CD4-positive, alpha-beta T cell (primary cell): ENCODE measurements at regions of chr1 and their contacts with region 1.

Region 1: GRCh38 chr1:101309334-101310311 is 72.8 kb downstream of the S1PR1 start:
- DNase-seq: peak; percentile 53 to 94 (median 74)
- ATAC-seq: peak; percentile 76
- H3K4me3 ChIP-seq: peak overlapping the region; percentile 52
- H3K4me3 Mint-ChIP-seq: peak overlapping the region; percentile 76
- H3K27ac ChIP-seq: peak overlapping the region; percentile 82 to 88
- H3K27ac Mint-ChIP-seq: peak overlapping the region; percentile 96
- H3K4me1 ChIP-seq: peaks cover 56% of the 10 kb centered on the region
- H3K4me1 Mint-ChIP-seq: peaks cover 66% of the 10 kb centered on the region
- H3K27me3 ChIP-seq: no peaks in the 10 kb centered on the region
- H3K27me3 Mint-ChIP-seq: no peaks in the 10 kb centered on the region
- CTCF ChIP-seq: peak; percentile 89

Region 2: GRCh38 chr1:100928128-100928527 is 381.5 kb before region 1 on chr1:
- CTCF ChIA-PET with region 1: interaction called, 6 read pairs
- POLR2A ChIA-PET with region 1: interaction called, 10 read pairs
- intact Hi-C with region 1: no loop called
- DNase-seq: peak in 4 of 14 experiments; percentile 36 to 64 (median 53)
- ATAC-seq: no peak
- H3K4me3 ChIP-seq: peak overlapping the region; percentile 28
- H3K4me3 Mint-ChIP-seq: no peak overlapping the region
- H3K27ac ChIP-seq: peak overlapping the region; percentile 72 to 77
- H3K27ac Mint-ChIP-seq: no peak overlapping the region
- H3K4me1 ChIP-seq: peaks cover 46% of the 10 kb centered on the region
- H3K4me1 Mint-ChIP-seq: peaks cover 41% of the 10 kb centered on the region
- H3K27me3 ChIP-seq: no peaks in the 10 kb centered on the region
- H3K27me3 Mint-ChIP-seq: no peaks in the 10 kb centered on the region
- CTCF ChIP-seq: no peak

Region 3: DNA sequence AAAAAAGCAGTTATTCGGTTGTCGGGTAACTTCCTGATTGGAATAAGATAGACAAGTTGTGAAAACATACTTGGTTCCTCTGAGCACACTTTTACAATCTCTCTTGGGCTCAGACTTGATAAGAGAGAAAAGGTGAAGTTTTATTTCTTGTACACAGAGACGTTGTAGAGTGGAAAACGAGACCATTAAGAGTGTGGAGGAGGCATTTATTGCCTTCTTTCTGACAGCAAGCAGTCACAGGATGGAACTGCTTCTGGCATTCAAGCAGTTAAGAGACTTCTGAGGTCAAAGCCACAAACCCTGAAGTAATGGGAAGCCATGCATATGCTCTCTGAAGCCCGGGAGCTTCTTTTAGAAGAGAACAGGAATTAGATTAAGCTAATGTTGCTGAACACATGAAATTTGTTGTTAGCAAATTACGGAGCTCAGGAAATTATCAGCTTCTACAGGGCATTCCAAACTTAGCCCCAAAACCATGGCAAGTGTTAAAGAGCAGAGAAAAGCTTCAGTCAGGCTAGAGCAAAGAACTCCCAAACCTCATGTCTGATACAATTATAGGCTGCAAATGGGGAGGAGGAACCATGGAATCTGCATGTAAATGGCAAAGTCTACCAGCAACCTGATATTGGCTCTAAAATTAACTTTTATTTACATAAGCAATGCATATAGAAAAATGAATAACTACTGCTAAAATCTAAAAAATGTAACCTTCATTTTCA is 46.8 kb before region 1 on chr1:
- CTCF ChIA-PET with region 1: no interaction called
- POLR2A ChIA-PET with region 1: interaction called, 7 read pairs
- intact Hi-C with region 1: loop called in 1 of 2 experiments (anchors 2 kb)
- DNase-seq: peak in 5 of 14 experiments; percentile 12 to 87 (median 61)
- ATAC-seq: peak; percentile 55
- H3K4me3 ChIP-seq: peak overlapping the region; percentile 25
- H3K4me3 Mint-ChIP-seq: peak overlapping the region; percentile 83
- H3K27ac ChIP-seq: peak overlapping the region in 1 of 2 donors; percentile 12
- H3K27ac Mint-ChIP-seq: peak overlapping the region; percentile 88
- H3K4me1 ChIP-seq: peaks cover 80% of the 10 kb centered on the region
- H3K4me1 Mint-ChIP-seq: peaks cover 85% of the 10 kb centered on the region
- H3K27me3 ChIP-seq: no peaks in the 10 kb centered on the region
- H3K27me3 Mint-ChIP-seq: no peaks in the 10 kb centered on the region
- CTCF ChIP-seq: no peak

Region 4: DNA sequence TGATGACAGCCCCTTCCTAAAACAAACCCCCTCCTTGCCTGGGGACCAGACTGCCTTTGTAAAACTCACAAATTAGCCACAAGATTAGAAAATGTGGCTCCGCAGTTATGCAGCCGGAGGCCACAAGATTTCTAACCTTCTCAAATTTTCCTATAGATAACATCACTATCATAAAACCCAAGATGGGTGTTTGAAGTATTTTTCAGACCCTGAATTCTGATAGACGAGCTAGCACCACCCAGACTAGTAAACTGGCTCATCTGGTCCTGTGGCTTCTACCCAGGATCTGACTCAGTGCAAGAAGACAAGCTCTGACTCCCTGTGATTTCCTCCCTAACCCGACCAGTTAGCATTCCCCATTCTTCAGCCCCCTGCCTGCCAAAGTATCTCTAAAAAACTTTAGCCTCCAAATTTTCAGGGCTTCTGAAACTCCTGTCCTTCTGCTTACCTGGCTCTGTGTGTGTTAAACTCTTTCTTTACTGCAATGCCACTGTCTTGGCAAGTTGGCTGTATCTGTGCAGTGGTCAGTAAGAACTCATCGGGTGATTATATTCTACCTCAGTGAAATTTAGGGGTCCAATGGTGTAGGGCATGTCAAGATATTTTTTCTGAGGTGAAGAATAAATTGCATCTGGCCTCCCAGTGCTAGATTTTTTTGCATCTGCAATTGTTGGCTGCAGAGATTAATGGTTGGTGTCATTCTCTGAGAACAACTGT is 29.2 kb after region 1 on chr1:
- CTCF ChIA-PET with region 1: interaction called, 4 read pairs
- POLR2A ChIA-PET with region 1: no interaction called
- intact Hi-C with region 1: loop called in 1 of 2 experiments (anchors 2 kb)
- DNase-seq: peak in 2 of 14 experiments; percentile 21 to 55
- ATAC-seq: no peak
- H3K4me3 ChIP-seq: no peak overlapping the region
- H3K4me3 Mint-ChIP-seq: no peak overlapping the region
- H3K27ac ChIP-seq: no peak overlapping the region
- H3K27ac Mint-ChIP-seq: no peak overlapping the region
- H3K4me1 ChIP-seq: no peaks in the 10 kb centered on the region
- H3K4me1 Mint-ChIP-seq: no peaks in the 10 kb centered on the region
- H3K27me3 ChIP-seq: no peaks in the 10 kb centered on the region
- H3K27me3 Mint-ChIP-seq: no peaks in the 10 kb centered on the region
- CTCF ChIP-seq: no peak

Region 5: DNA sequence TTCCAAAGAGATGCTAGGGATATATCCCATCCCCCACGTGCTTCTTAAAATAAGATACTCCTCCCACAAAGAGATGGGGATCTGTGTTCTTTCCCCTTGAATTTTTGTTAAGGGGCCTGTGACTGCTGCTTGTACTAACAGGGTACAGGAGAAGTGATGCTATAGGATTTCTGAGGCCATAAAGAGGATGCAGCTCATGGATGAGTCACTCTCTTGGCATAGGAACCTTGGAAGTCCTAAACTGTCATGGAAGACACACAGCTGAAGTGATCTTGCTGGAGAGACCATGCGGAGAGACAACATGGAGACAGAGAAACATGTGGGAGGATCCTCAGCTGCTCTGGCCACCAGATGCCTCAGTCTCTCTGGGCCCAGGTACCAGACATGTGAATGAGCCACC is 84.4 kb after region 1 on chr1:
- CTCF ChIA-PET with region 1: no interaction called
- POLR2A ChIA-PET with region 1: no interaction called
- intact Hi-C with region 1: no loop called
- DNase-seq: no peak
- ATAC-seq: no peak
- H3K4me3 ChIP-seq: no peak overlapping the region
- H3K4me3 Mint-ChIP-seq: no peak overlapping the region
- H3K27ac ChIP-seq: no peak overlapping the region
- H3K27ac Mint-ChIP-seq: no peak overlapping the region
- H3K4me1 ChIP-seq: no peaks in the 10 kb centered on the region
- H3K4me1 Mint-ChIP-seq: no peaks in the 10 kb centered on the region
- H3K27me3 ChIP-seq: no peaks in the 10 kb centered on the region
- H3K27me3 Mint-ChIP-seq: no peaks in the 10 kb centered on the region
- CTCF ChIP-seq: no peak

Region 6: DNA sequence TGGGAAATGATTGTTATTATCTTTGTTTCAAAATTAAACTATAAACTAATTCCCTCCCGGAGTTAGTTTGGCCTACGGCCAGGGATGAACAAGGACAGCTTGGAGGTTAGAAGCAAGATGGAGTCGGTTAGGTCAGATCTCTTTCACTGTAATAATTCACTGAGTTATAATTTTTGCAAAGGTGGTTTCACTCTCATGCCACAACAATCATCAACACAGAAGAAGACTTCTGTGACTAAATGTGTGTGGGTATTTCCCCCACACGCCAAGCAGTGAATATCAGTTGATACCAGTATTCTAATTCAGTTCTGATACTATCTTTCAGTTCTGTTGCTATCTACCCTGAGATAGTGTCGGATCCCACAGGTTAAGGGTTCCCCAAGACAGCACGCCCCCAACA is 142.3 kb after region 1 on chr1:
- CTCF ChIA-PET with region 1: no interaction called
- POLR2A ChIA-PET with region 1: interaction called, 4 read pairs
- intact Hi-C with region 1: loop called in 1 of 2 experiments (anchors 10 kb)
- DNase-seq: peak in 2 of 14 experiments; percentile 1 to 8
- ATAC-seq: peak; percentile 34
- H3K4me3 ChIP-seq: no peak overlapping the region
- H3K4me3 Mint-ChIP-seq: no peak overlapping the region
- H3K27ac ChIP-seq: no peak overlapping the region
- H3K27ac Mint-ChIP-seq: peak overlapping the region; percentile 52
- H3K4me1 ChIP-seq: peaks cover 31% of the 10 kb centered on the region
- H3K4me1 Mint-ChIP-seq: peaks cover 43% of the 10 kb centered on the region
- H3K27me3 ChIP-seq: no peaks in the 10 kb centered on the region
- H3K27me3 Mint-ChIP-seq: no peaks in the 10 kb centered on the region
- CTCF ChIP-seq: no peak